ENCODE measurements at regions of chr9 and their contacts with region 1.

Region 1: DNA sequence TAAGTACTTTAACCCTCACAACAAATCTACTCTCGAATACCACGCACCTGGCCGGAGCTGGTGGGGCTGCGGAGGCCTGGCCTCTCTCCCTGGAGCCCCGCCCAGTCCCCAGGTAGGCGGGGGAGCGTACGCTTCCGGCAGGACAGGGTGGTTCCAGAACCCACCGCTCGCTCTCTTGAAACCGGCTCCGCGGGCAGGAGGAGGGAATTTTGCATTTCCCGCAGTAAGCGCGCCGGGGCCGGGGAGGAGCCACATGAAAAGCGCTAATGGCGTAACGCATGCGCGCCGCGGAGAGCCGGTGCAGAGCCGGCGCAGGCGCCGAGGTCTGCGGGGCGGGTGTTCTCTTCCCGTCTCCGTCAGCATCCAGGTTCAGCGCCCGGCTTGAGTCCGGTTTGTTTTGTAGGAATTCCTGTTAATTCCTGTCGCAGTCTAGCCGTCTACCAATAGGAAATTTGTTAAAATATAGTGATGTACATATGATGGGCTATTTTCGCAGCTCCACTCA is 20.8 kb downstream of the CAVIN4 start:
- DNase-seq: peak; percentile 83
- H3K4me3 Mint-ChIP-seq: peak overlapping the region; percentile 72
- H3K27ac Mint-ChIP-seq: peak overlapping the region; percentile 58
- H3K4me1 Mint-ChIP-seq: peaks cover 15% of the 10 kb centered on the region
- H3K27me3 Mint-ChIP-seq: no peaks in the 10 kb centered on the region

Region 2: GRCh38 chr9:99819856-99820684 is 778.6 kb before region 1 on chr9:
- CTCF ChIA-PET with region 1: no interaction called
- intact Hi-C with region 1: loop called (anchors 5 kb)
- DNase-seq: peak; percentile 91
- H3K4me3 Mint-ChIP-seq: peak overlapping the region; percentile 94
- H3K27ac Mint-ChIP-seq: peak overlapping the region; percentile 91
- H3K4me1 Mint-ChIP-seq: peaks cover 45% of the 10 kb centered on the region
- H3K27me3 Mint-ChIP-seq: peaks cover 17% of the 10 kb centered on the region

Region 3: DNA sequence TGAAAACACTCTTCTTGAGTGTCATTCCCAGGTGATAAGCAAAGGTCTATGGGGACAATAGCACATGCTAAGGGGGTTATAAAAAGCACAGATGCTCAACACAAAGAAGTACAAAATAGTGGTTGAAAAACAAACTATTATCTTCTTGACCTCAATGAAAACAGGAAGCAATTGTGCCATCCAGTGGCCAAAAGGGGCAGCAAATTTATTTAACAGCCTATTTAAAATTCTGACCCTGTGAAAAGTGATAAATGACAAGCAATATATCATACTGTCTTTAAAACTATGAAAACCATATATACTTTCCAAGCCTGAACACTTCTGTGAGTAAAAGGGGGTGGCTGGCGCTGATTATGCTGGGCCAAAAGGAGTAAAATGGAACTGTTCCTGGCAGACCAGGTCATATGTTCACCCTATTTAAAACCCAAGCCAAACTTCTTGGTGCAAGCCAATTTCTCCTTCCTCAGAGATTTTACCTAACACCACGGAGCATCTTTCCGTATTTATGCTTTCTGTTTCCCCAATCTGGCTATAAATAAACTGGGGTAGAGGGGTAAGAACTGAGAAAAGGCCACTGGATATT is 275.6 kb before region 1 on chr9:
- CTCF ChIA-PET with region 1: interaction called, 4 read pairs
- intact Hi-C with region 1: loop called (anchors 2 kb)
- DNase-seq: peak; percentile 52
- H3K4me3 Mint-ChIP-seq: no peak overlapping the region
- H3K27ac Mint-ChIP-seq: no peak overlapping the region
- H3K4me1 Mint-ChIP-seq: peaks cover 12% of the 10 kb centered on the region
- H3K27me3 Mint-ChIP-seq: no peaks in the 10 kb centered on the region

Region 4: DNA sequence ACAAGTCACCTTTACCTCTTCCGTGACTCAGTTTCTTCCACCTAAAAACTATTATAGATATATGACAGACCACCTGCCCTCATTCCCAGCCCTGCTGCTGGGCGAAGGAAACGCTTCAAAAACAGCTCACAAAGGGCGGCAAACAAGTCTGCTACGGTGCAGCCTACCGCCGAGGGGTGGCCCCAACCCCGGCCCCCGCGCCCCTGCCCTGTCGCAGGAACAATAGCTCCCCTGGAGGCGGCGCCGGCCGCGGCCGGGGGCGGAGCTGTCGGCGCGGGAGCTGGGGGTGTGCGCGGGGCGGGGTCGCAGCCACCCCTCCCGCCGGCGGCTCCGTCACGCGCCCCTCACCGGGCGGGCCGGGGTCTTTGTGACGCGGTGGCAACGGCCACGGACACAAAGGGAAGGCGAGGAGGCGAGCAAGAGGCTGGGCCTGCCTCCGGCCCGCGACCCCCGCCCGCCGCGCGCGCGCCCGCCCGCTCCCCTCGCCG is 125.9 kb before region 1 on chr9 and contains the start of gene TMEFF1:
- CTCF ChIA-PET with region 1: no interaction called
- intact Hi-C with region 1: loop called (anchors 10 kb)
- DNase-seq: peak; percentile 64
- H3K4me3 Mint-ChIP-seq: peak within 1 kb of the TSS; percentile 59
- H3K27ac Mint-ChIP-seq: no peak within 1 kb of the TSS
- H3K4me1 Mint-ChIP-seq: peaks cover 3% of the 10 kb centered on the region
- H3K27me3 Mint-ChIP-seq: peaks cover 20% of the 10 kb centered on the region
- total RNA-seq, gene TMEFF1: 0.26 to 0.27 TPM

Region 5: DNA sequence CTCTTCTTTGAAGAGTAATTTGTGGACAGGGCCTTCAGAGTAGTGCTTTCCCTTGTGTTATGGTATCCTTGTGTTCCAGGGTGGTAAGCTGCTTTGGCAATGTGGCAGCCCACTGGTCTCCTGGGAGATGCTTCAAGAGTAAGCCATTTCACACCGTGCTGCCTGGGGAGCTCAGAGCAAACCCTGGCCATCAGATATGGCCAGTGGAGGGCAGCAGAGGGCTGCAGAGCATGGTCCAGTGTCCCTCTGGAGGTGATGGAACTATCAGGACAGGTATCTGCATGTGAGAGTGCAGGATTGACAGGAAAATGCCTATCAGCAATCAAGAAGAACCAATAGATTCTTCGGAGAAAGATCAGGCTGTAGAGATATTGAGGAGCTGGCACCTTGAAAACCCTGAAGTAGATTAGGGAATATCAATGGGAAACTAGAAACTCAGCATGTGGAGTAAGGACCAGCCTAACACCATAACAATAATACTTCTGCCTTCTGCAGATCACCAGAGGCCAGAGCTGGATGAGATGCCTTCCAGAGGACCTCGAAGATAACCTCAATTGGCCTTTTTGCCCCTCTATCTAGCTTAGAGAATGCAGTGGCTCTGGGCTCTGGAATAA is 520.6 kb after region 1 on chr9:
- CTCF ChIA-PET with region 1: no interaction called
- intact Hi-C with region 1: loop called (anchors 1 kb)
- DNase-seq: peak; percentile 42
- H3K4me3 Mint-ChIP-seq: no peak overlapping the region
- H3K27ac Mint-ChIP-seq: no peak overlapping the region
- H3K4me1 Mint-ChIP-seq: no peaks in the 10 kb centered on the region
- H3K27me3 Mint-ChIP-seq: no peaks in the 10 kb centered on the region

Region 6: DNA sequence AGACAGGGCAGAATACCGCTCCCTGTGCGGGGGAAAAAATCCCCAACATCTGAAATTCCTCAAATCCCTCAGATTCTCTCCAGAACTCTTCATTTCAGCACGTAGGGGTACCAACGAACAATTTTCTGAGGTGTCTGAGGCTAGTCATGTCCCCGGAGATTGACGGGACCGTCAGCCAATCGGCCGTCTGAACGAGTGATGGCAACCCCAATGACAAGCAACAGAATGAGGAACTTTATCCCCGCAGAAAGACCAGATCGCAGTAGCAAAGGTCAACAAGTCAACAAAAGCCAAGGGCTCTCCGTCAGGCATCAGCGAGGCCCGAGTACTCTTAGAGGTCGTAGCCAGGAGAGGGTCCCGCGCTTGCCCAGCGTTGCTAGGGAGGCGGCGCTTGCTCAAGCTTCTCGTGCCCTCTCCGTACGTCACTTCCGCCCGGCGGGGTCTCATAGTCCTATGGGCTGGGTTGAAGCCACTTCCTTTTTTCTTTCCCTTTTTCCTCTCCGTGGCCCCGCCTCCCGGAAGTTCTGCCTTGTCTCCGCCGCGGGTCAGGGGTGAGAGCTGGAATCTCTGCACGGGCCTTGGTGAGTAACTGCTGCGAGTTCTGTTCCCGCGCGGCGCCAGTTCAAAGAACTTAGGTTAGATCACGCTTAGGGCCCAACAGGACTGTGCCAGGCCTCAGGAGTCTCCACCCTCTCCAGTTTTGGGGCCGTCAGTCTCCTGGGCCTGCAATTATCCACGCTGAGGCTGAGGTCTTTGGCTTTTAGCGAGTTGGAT is 934.8 kb after region 1 on chr9 and contains the start of gene RNF20:
- CTCF ChIA-PET with region 1: no interaction called
- intact Hi-C with region 1: loop called (anchors 1 kb)
- DNase-seq: peak; percentile 100
- H3K4me3 Mint-ChIP-seq: peak within 1 kb of the TSS; percentile 79
- H3K27ac Mint-ChIP-seq: peak within 1 kb of the TSS; percentile 93
- H3K4me1 Mint-ChIP-seq: peaks cover 14% of the 10 kb centered on the region
- H3K27me3 Mint-ChIP-seq: peaks cover 5% of the 10 kb centered on the region
- total RNA-seq, gene RNF20: 42.0 to 45.9 TPM